ENCODE measurements at regions of chr9 and their contacts with region 1.

Region 1: DNA sequence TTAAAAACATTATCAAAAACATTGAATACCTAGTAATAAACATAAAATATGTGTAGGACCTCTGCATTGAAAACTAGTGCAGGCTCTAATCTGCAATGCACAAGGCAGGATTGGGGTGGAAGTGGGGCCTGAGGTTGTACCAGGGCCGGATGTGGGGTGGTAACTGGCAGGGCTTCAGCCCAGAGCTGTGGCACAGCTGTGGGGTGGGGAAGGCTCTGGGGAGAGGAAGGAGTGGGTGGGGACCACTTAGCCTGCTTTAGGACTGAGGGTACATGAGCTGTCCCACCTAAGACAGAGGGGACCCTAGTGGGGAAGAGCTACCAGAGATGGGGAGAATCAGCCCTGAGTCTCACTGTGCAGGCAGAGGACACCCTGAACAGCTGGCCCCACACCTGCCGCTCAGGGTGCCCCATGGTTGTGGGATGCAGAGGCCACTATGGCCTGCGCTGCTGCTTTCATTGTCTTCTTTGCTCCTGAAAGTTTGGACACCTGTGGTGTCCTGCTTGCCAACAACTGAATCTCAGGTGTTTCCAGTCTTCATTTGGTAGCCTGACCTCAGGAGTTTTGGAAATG is 311.4 kb downstream of the TLE4 start:
- DNase-seq: peak; percentile 14 to 82 (median 67)
- ATAC-seq: peak; percentile 94
- H3K4me3 ChIP-seq: peak overlapping the region in 1 of 2 experiments; percentile 28
- H3K4me3 Mint-ChIP-seq: peak overlapping the region; percentile 69
- H3K27ac ChIP-seq: no peak overlapping the region
- H3K27ac Mint-ChIP-seq: no peak overlapping the region
- H3K4me1 ChIP-seq: peaks cover 52% of the 10 kb centered on the region
- H3K4me1 Mint-ChIP-seq: peaks cover 61% of the 10 kb centered on the region
- H3K27me3 ChIP-seq: no peaks in the 10 kb centered on the region
- H3K27me3 Mint-ChIP-seq: no peaks in the 10 kb centered on the region
- CTCF ChIP-seq: no peak

Region 2: GRCh38 chr9:79577969-79578723 is 305.0 kb before region 1 on chr9:
- CTCF ChIA-PET with region 1: interaction called, 3 read pairs
- POLR2A ChIA-PET with region 1: no interaction called
- intact Hi-C with region 1: loop called in 1 of 2 experiments (anchors 5 kb)
- DNase-seq: no peak
- ATAC-seq: no peak
- H3K4me3 ChIP-seq: no peak overlapping the region
- H3K4me3 Mint-ChIP-seq: no peak overlapping the region
- H3K27ac ChIP-seq: no peak overlapping the region
- H3K27ac Mint-ChIP-seq: peak overlapping the region; percentile 41
- H3K4me1 ChIP-seq: peaks cover 70% of the 10 kb centered on the region
- H3K4me1 Mint-ChIP-seq: peaks cover 90% of the 10 kb centered on the region
- H3K27me3 ChIP-seq: no peaks in the 10 kb centered on the region
- H3K27me3 Mint-ChIP-seq: no peaks in the 10 kb centered on the region
- CTCF ChIP-seq: no peak

Region 3: GRCh38 chr9:79812507-79813257 is 70.5 kb before region 1 on chr9:
- CTCF ChIA-PET with region 1: no interaction called
- POLR2A ChIA-PET with region 1: no interaction called
- intact Hi-C with region 1: loop called in 1 of 2 experiments (anchors 5 kb)
- DNase-seq: peak in 2 of 9 experiments; percentile 15 to 35
- ATAC-seq: peak; percentile 20
- H3K4me3 ChIP-seq: peak overlapping the region; percentile 14 to 37
- H3K4me3 Mint-ChIP-seq: peak overlapping the region; percentile 81
- H3K27ac ChIP-seq: no peak overlapping the region
- H3K27ac Mint-ChIP-seq: peak overlapping the region; percentile 43
- H3K4me1 ChIP-seq: peaks cover 14% of the 10 kb centered on the region
- H3K4me1 Mint-ChIP-seq: peaks cover 30% of the 10 kb centered on the region
- H3K27me3 ChIP-seq: no peaks in the 10 kb centered on the region
- H3K27me3 Mint-ChIP-seq: no peaks in the 10 kb centered on the region
- CTCF ChIP-seq: no peak